ENCODE measurements at regions of chr4 and their contacts with region 1.

Region 1: GRCh38 chr4:185656467-185656931 is 121.2 kb upstream of the PDLIM3 start:
- DNase-seq: peak; percentile 55 to 83 (median 82)
- ATAC-seq: peak; percentile 83 to 90
- H3K4me3 ChIP-seq: peak overlapping the region; percentile 33
- H3K27ac ChIP-seq: peak overlapping the region; percentile 79
- H3K4me1 ChIP-seq: peaks cover 3% of the 10 kb centered on the region
- H3K27me3 ChIP-seq: no peaks in the 10 kb centered on the region

Region 2: DNA sequence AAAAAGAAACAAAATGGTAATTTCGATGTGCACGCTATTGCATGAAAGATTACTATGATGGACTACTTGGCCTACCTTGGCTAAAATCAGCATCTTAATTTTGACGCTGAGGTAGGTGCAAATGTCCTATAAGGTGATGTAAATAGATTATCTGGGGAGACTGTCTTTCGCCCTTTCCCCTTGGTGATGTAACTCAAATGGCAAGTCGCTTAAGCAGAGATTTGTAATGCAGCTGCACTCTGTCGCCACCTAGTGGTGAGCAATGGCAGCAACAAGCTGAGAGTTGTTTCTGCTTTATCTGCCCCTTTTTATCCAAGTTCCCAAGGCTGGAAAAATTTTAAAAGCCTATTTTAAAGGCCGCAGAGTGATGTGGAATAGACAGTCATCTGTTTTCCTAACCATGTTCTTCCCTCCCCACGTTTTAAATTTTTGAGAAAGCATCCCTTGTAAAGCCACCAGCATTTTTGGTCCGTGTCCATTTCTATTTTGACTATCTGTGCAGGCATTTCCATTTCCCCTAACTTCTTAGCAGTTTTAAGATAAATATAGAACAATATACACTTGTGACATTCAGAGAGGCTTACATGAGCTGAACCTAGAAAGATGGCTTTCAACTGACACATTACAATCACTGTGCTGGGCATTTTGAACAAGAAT is 58.8 kb before region 1 on chr4:
- intact Hi-C with region 1: no loop called
- DNase-seq: peak; percentile 75 to 89 (median 87)
- ATAC-seq: peak; percentile 55 to 58
- H3K4me3 ChIP-seq: no peak overlapping the region
- H3K27ac ChIP-seq: no peak overlapping the region
- H3K4me1 ChIP-seq: no peaks in the 10 kb centered on the region
- H3K27me3 ChIP-seq: no peaks in the 10 kb centered on the region

Region 3: DNA sequence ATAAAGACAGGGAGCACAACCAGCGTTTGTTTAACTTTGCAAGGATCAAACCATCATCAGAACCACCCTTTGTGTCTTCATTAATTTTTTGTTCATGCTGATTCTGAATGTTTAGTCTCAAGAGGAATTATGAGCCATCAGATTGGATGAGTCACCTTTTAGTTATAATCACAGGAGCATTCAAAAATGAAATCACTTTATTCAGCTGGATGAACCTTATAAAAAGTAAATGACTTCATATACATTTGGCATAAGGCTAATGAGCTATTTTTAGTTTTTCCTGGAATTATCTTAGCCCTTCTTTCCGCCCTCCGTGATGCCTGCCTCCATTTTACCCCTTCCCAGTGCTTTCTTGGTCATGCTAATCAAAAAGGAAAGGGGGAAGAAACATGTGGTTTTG is 51.8 kb after region 1 on chr4:
- intact Hi-C with region 1: no loop called
- DNase-seq: no peak
- ATAC-seq: no peak
- H3K4me3 ChIP-seq: no peak overlapping the region
- H3K27ac ChIP-seq: peak overlapping the region; percentile 68
- H3K4me1 ChIP-seq: peaks cover 5% of the 10 kb centered on the region
- H3K27me3 ChIP-seq: no peaks in the 10 kb centered on the region

Region 4: GRCh38 chr4:185726931-185727330 is 70.4 kb after region 1 on chr4:
- intact Hi-C with region 1: loop called in 1 of 4 experiments (anchors 10 kb)
- DNase-seq: peak in 1 of 3 donors; percentile 63
- ATAC-seq: peak in 1 of 2 donors; percentile 22
- H3K4me3 ChIP-seq: no peak overlapping the region
- H3K27ac ChIP-seq: no peak overlapping the region
- H3K4me1 ChIP-seq: peaks cover 7% of the 10 kb centered on the region
- H3K27me3 ChIP-seq: no peaks in the 10 kb centered on the region

Region 5: DNA sequence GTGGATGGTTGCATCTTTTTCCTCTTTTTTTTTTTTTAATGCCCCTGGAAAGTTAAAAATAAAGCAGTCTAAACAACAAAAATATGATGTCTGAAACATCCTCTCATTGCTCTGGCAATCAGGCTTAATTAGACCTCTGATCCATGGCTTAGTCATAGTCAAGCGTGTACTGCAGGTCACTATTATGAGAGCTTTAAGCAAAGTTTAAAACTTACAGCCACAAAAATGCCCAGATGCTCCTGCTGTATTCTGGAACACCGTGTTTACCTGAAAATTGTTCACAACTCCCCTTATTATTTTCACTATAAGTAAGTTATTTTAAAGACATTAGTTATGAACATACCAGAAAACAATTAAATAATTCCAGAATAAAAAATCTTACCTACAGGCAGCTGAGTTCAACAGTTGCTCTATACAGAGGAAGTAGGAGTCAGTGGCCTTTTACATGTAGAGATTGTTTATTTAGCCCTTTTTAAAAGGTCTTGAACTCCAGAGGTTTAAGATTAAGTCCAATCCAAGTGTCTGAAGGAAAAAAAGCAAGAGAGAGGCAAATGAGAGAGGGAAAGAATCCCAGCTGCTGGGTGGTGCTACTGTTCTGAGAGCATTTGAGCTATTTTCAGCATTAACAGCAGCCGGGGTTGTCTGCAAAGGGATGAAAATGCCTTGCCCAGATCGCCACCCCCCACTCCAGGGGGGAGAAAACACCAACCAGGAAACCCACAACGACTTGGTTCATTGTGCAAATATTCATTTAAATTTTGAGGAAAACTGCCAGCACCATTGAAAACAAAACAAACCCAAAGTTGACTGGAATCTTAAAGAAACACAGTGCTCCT is 118.6 kb after region 1 on chr4:
- intact Hi-C with region 1: loop called in 1 of 4 experiments (anchors 10 kb)
- DNase-seq: peak in 1 of 3 donors; percentile 50
- ATAC-seq: peak; percentile 55 to 70
- H3K4me3 ChIP-seq: peak overlapping the region; percentile 76
- H3K27ac ChIP-seq: peak overlapping the region; percentile 94
- H3K4me1 ChIP-seq: peaks cover 4% of the 10 kb centered on the region
- H3K27me3 ChIP-seq: no peaks in the 10 kb centered on the region

Region 6: DNA sequence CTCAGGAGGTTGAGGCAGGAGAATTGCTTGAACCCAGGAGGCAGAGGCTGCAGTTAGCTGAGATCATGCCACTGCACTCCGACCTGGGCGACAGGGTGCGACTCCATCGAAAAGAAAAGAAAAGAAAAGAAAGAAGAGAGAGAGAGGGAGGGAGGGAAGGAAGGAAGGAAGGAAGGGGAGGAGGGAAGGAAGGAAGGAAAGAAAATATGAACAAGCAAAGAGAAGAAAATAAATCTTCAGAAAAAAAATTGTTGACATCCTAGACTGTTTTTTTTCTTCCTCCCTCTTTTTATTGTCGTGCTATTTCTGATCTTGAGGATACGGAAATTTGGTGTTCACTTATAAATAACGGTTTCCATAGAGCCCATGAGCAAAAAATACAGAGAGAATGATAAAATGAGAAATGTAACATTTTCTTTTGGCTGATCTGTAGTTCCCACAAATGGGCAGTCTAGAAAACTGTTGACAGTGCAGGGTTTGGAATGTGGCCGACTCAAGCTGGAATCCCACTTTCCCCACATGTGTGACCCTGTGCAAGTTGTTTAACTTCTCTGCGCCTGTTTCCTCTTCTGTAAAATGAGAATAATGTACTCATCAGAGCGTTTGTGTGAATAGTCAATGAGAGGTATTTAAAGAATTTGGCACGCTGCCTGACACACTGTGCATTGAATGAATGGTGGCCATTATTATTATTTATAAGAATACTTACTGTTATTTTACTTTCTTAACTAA is 136.1 kb after region 1 on chr4:
- intact Hi-C with region 1: loop called in 1 of 4 experiments (anchors 10 kb)
- DNase-seq: peak in 1 of 3 donors; percentile 52
- ATAC-seq: no peak
- H3K4me3 ChIP-seq: no peak overlapping the region
- H3K27ac ChIP-seq: no peak overlapping the region
- H3K4me1 ChIP-seq: peaks cover 5% of the 10 kb centered on the region
- H3K27me3 ChIP-seq: no peaks in the 10 kb centered on the region

Region 7: GRCh38 chr4:185865901-185866328 is 209.4 kb after region 1 on chr4:
- intact Hi-C with region 1: loop called in 1 of 4 experiments (anchors 10 kb)
- DNase-seq: no peak
- ATAC-seq: peak; percentile 58 to 65
- H3K4me3 ChIP-seq: no peak overlapping the region
- H3K27ac ChIP-seq: peak overlapping the region; percentile 78
- H3K4me1 ChIP-seq: no peaks in the 10 kb centered on the region
- H3K27me3 ChIP-seq: no peaks in the 10 kb centered on the region

Measured in right cardiac atrium (tissue), 5 donors.